CD4-positive, alpha-beta memory T cell (primary cell): ENCODE measurements at regions of chr12 and their contacts with region 1.

Region 1: GRCh38 chr12:121626087-121626852 is at the start of gene ORAI1:
- DNase-seq: peak; percentile 93 to 98 (median 96)
- H3K4me3 ChIP-seq: peak within 1 kb of the TSS; percentile 88 to 96
- H3K4me3 Mint-ChIP-seq: peak within 1 kb of the TSS; percentile 96 to 98 (median 98)
- H3K27ac ChIP-seq: peak within 1 kb of the TSS; percentile 97
- H3K27ac Mint-ChIP-seq: peak within 1 kb of the TSS; percentile 96 to 100 (median 97)
- H3K4me1 ChIP-seq: peaks cover 46% of the 10 kb centered on the region
- H3K4me1 Mint-ChIP-seq: peaks cover 30 to 59% (median 39%) of the 10 kb centered on the region in 4 donors
- H3K27me3 ChIP-seq: no peaks in the 10 kb centered on the region
- H3K27me3 Mint-ChIP-seq: peaks cover 0 to 2% of the 10 kb centered on the region in 2 donors
- total RNA-seq, gene ORAI1: 48.8 to 51.7 TPM

Region 2: GRCh38 chr12:121530600-121531355 is 95.5 kb before region 1 on chr12:
- CTCF ChIA-PET with region 1: interaction called, 4 read pairs
- POLR2A ChIA-PET with region 1: interaction called, 22 read pairs
- intact Hi-C with region 1: loop called (anchors 1 kb)
- DNase-seq: peak; percentile 63 to 87 (median 66)
- H3K4me3 ChIP-seq: peak overlapping the region in 1 of 2 donors; percentile 16
- H3K4me3 Mint-ChIP-seq: peak overlapping the region; percentile 26 to 75 (median 58)
- H3K27ac ChIP-seq: peak overlapping the region; percentile 51
- H3K27ac Mint-ChIP-seq: peak overlapping the region; percentile 85 to 95 (median 91)
- H3K4me1 ChIP-seq: peaks cover 58% of the 10 kb centered on the region
- H3K4me1 Mint-ChIP-seq: peaks cover 35 to 66% (median 51%) of the 10 kb centered on the region in 4 donors
- H3K27me3 ChIP-seq: no peaks in the 10 kb centered on the region
- H3K27me3 Mint-ChIP-seq: no peaks in the 10 kb centered on the region

Region 3: GRCh38 chr12:121550974-121551634 is 75.2 kb before region 1 on chr12:
- CTCF ChIA-PET with region 1: interaction called, 230 read pairs
- POLR2A ChIA-PET with region 1: interaction called, 53 read pairs
- intact Hi-C with region 1: loop called (anchors 1 kb)
- DNase-seq: no peak
- H3K4me3 ChIP-seq: no peak overlapping the region
- H3K4me3 Mint-ChIP-seq: no peak overlapping the region
- H3K27ac ChIP-seq: no peak overlapping the region
- H3K27ac Mint-ChIP-seq: peak overlapping the region in 2 of 7 donors; percentile 42 to 64
- H3K4me1 ChIP-seq: no peaks in the 10 kb centered on the region
- H3K4me1 Mint-ChIP-seq: peaks cover 3 to 7% (median 5%) of the 10 kb centered on the region in 4 donors
- H3K27me3 ChIP-seq: no peaks in the 10 kb centered on the region
- H3K27me3 Mint-ChIP-seq: no peaks in the 10 kb centered on the region

Region 4: GRCh38 chr12:121590476-121591143 is 35.7 kb before region 1 on chr12:
- CTCF ChIA-PET with region 1: interaction called, 11 read pairs
- POLR2A ChIA-PET with region 1: interaction called, 95 read pairs
- intact Hi-C with region 1: loop called (anchors 1 kb)
- DNase-seq: peak; percentile 84 to 86 (median 85)
- H3K4me3 ChIP-seq: peak overlapping the region; percentile 42 to 62
- H3K4me3 Mint-ChIP-seq: peak overlapping the region; percentile 87 to 94 (median 92)
- H3K27ac ChIP-seq: peak overlapping the region; percentile 97
- H3K27ac Mint-ChIP-seq: peak overlapping the region; percentile 94 to 100 (median 99)
- H3K4me1 ChIP-seq: peaks cover 52% of the 10 kb centered on the region
- H3K4me1 Mint-ChIP-seq: peaks cover 23 to 49% (median 35%) of the 10 kb centered on the region in 4 donors
- H3K27me3 ChIP-seq: no peaks in the 10 kb centered on the region
- H3K27me3 Mint-ChIP-seq: no peaks in the 10 kb centered on the region

Region 5: DNA sequence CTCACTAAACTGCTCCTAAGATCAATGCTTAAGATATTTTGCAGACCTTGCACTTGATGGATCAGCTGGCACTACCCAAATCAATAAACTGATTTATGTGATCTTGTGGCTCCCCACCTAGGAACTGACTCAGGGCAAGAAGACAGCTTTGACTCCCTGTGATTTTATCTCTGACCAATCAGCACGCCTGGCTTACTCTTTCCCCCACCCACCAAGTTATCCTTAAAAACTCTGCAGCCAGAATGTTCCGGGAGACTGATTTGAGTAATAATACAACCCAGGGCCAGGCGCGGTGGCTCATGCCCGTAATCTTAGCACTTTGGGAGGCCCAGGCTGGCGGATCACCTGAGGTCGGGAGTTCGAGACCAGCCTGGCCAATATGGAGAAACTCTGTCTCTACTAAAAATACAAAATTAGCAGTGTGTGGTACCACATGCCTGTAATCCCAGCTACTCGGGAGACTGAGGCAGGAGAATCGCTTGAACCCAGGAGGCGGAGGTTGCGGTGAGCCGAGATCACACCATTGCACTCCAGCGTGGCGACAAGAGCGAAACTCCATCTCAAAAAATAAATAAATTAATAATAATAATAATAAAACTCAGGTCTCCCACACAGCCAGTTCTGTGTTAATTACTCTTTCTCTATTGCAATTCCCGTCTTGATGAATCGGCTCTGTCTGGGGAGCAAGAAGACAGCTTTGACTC is 31.2 kb after region 1 on chr12:
- CTCF ChIA-PET with region 1: interaction called, 31 read pairs
- POLR2A ChIA-PET with region 1: interaction called, 122 read pairs
- intact Hi-C with region 1: no loop called
- DNase-seq: no peak
- H3K4me3 ChIP-seq: no peak overlapping the region
- H3K4me3 Mint-ChIP-seq: peak overlapping the region; percentile 8 to 94 (median 62)
- H3K27ac ChIP-seq: no peak overlapping the region
- H3K27ac Mint-ChIP-seq: peak overlapping the region; percentile 78 to 100 (median 99)
- H3K4me1 ChIP-seq: peaks cover 56% of the 10 kb centered on the region
- H3K4me1 Mint-ChIP-seq: peaks cover 41 to 77% (median 55%) of the 10 kb centered on the region in 4 donors
- H3K27me3 ChIP-seq: no peaks in the 10 kb centered on the region
- H3K27me3 Mint-ChIP-seq: no peaks in the 10 kb centered on the region

Region 6: GRCh38 chr12:121688966-121689365 is 62.7 kb after region 1 on chr12:
- CTCF ChIA-PET with region 1: interaction called, 7 read pairs
- POLR2A ChIA-PET with region 1: interaction called, 23 read pairs
- intact Hi-C with region 1: no loop called
- DNase-seq: no peak
- H3K4me3 ChIP-seq: no peak overlapping the region
- H3K4me3 Mint-ChIP-seq: no peak overlapping the region
- H3K27ac ChIP-seq: no peak overlapping the region
- H3K27ac Mint-ChIP-seq: peak overlapping the region in 5 of 7 donors; percentile 12 to 48 (median 37)
- H3K4me1 ChIP-seq: peaks cover 6% of the 10 kb centered on the region
- H3K4me1 Mint-ChIP-seq: peaks cover 6 to 13% (median 7%) of the 10 kb centered on the region in 4 donors
- H3K27me3 ChIP-seq: no peaks in the 10 kb centered on the region
- H3K27me3 Mint-ChIP-seq: no peaks in the 10 kb centered on the region

Region 7: DNA sequence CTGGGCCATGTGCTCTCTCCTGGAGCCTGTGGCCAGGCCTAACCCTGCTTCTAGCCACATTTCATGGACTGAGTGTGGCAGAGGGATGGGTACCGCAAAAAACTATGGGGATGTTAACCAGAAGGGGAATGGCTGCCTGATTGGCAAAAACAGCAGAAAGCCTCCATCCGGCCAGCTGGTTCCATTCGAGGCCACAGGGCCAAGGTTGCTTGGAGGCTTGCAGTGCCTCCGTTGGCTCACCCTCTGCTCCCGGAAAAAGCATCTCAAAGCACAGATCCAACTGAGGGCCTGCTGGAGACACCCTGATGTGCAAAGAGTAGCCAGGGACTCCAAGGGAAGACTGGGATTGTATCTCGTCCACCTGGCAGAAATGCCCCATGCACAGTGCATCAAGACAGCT is 102.8 kb after region 1 on chr12:
- CTCF ChIA-PET with region 1: no interaction called
- POLR2A ChIA-PET with region 1: no interaction called
- intact Hi-C with region 1: no loop called
- DNase-seq: no peak
- H3K4me3 ChIP-seq: no peak overlapping the region
- H3K4me3 Mint-ChIP-seq: no peak overlapping the region
- H3K27ac ChIP-seq: no peak overlapping the region
- H3K27ac Mint-ChIP-seq: no peak overlapping the region
- H3K4me1 ChIP-seq: no peaks in the 10 kb centered on the region
- H3K4me1 Mint-ChIP-seq: no peaks in the 10 kb centered on the region
- H3K27me3 ChIP-seq: no peaks in the 10 kb centered on the region
- H3K27me3 Mint-ChIP-seq: no peaks in the 10 kb centered on the region